ENCODE measurements at regions of chr6 and their contacts with region 1.

Region 1: DNA sequence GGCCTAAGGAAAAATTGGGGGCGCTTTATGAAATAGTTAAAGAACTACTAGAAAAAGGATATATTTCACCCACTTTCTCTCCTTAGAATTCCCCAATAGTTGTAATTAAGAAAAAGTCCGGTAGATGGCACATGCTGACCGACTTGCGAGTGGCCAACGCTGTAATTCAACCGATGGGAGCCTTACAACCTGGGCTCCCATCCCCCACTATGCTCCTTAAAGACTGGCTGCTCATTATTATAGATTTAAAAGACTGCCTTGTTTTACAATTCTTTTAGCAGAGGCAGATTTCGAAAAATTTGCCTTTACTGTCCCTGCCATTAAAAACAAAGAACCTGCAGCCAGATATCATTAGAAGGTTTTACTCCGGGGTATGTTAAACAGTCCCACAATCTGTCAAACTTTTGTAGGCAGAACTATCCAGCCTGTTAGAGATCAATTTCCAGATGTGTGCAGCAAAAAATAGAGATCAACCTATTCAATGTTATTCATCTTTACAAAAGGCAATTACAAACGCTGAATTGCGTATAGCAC is 58.5 kb upstream of the PRSS16 start:
- DNase-seq: peak; percentile 64
- ATAC-seq: peak; percentile 91
- H3K4me3 ChIP-seq: peak overlapping the region; percentile 61 to 62
- H3K27ac ChIP-seq: peak overlapping the region; percentile 61
- H3K4me1 ChIP-seq: peaks cover 2 to 13% of the 10 kb centered on the region in 2 experiments; a peak in 3 of 4 replicates
- H3K27me3 ChIP-seq: no peaks in the 10 kb centered on the region
- CTCF ChIP-seq: peak; percentile 50 to 85 (median 70); a peak in 5 of 6 replicates
- POLR2A ChIP-seq: no peak
- RAD21 ChIP-seq: peak; percentile 95

Region 2: GRCh38 chr6:27472617-27473400 is 283.9 kb after region 1 on chr6 and contains the start of gene ZNF184:
- CTCF ChIA-PET with region 1: no interaction called
- POLR2A ChIA-PET with region 1: no interaction called
- RAD21 ChIA-PET with region 1: no interaction called
- intact Hi-C with region 1: loop called (anchors 5 kb)
- DNase-seq: peak; percentile 98
- ATAC-seq: peak; percentile 92
- H3K4me3 ChIP-seq: peak within 1 kb of the TSS; percentile 68 to 75
- H3K27ac ChIP-seq: peak within 1 kb of the TSS; percentile 88
- H3K4me1 ChIP-seq: peaks cover 2 to 28% of the 10 kb centered on the region in 2 experiments; a peak in 3 of 4 replicates
- H3K27me3 ChIP-seq: no peaks in the 10 kb centered on the region
- CTCF ChIP-seq: no peak
- POLR2A ChIP-seq: peak; percentile 77
- RAD21 ChIP-seq: no peak
- total RNA-seq, gene ZNF184: 9.4 TPM

Region 3: DNA sequence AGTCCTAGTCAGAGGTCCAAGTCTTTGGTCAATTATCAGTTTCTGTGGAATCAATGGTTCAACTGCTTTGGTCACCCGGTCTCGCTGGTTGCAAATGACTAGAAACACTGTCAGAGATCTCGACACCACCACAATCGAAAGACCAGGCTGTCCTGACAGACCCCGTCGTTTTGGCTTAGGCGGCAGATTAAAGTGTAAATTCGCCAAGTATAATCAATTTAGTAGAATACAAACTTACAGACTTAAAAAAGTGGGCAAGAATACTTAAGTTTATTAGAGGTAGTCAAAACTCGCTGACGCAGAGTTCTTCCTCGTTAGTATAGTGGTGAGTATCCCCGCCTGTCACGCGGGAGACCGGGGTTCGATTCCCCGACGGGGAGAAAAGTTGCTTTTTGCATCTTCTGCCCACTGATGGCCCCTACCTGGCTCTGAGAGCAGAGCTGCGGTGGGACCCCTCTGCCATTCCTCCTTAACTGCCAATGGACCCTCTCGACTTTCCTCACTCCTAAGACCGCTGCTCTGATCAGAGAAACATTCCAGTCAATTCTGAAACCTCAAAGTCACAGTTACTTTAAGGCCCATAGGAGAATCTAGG is 314.6 kb after region 1 on chr6:
- CTCF ChIA-PET with region 1: no interaction called
- POLR2A ChIA-PET with region 1: no interaction called
- RAD21 ChIA-PET with region 1: no interaction called
- intact Hi-C with region 1: loop called (anchors 2 kb)
- DNase-seq: peak; percentile 72
- ATAC-seq: peak; percentile 51
- H3K4me3 ChIP-seq: peak overlapping the region; percentile 51 to 59
- H3K27ac ChIP-seq: peak overlapping the region; percentile 42
- H3K4me1 ChIP-seq: peaks cover 9 to 34% of the 10 kb centered on the region in 2 experiments; a peak in 3 of 4 replicates
- H3K27me3 ChIP-seq: no peaks in the 10 kb centered on the region
- CTCF ChIP-seq: no peak
- POLR2A ChIP-seq: no peak
- RAD21 ChIP-seq: no peak

Region 4: DNA sequence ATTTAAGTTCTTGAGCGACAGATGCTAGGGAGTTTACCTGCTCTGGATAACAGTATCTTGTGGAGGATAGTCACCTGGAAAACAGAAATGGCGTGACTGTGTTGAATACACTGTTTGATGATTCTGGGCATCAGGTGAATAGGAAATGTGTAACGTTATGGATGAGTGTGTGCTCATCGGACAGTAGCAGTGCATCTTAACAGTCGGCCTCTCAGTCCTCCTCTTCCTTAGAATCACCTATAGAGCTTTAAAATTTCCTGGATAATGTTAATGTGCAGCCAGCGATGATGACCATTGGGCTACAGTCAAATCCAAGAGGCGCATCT is 505.6 kb after region 1 on chr6:
- CTCF ChIA-PET with region 1: no interaction called
- POLR2A ChIA-PET with region 1: no interaction called
- RAD21 ChIA-PET with region 1: no interaction called
- intact Hi-C with region 1: loop called (anchors 5 kb)
- DNase-seq: no peak
- ATAC-seq: no peak; the same call in 1 of the 2 replicates
- H3K4me3 ChIP-seq: peak overlapping the region; percentile 79 to 91
- H3K27ac ChIP-seq: peak overlapping the region; percentile 99
- H3K4me1 ChIP-seq: peaks cover 7 to 21% of the 10 kb centered on the region in 2 experiments; a peak in 3 of 4 replicates
- H3K27me3 ChIP-seq: no peaks in the 10 kb centered on the region
- CTCF ChIP-seq: 0 out of 6 replicates have a peak, but pooled peaks of 1 of the 3 experiments have one; percentile 1
- POLR2A ChIP-seq: no peak
- RAD21 ChIP-seq: no peak